ENCODE measurements at regions of chr17 and their contacts with region 1.

Region 1: GRCh38 chr17:80426681-80427326 is 11.8 kb downstream of the ENDOV start:
- DNase-seq: peak; percentile 67 to 95
- ATAC-seq: peak; percentile 74 to 91
- H3K4me3 ChIP-seq: no peak overlapping the region
- H3K27ac ChIP-seq: 0 out of 6 replicates have a peak overlapping the region, but pooled peaks of 1 of the 2 experiments have one; percentile 10
- H3K4me1 ChIP-seq: 0 out of 3 replicates have a peak, but pooled peaks cover 2% of the 10 kb centered on the region
- CTCF ChIP-seq: peak; percentile 98
- EP300 ChIP-seq: no peak
- POLR2A ChIP-seq: no peak
- RAD21 ChIP-seq: peak; percentile 98 to 99

Region 2: GRCh38 chr17:80195731-80196529 is 230.9 kb before region 1 on chr17:
- CTCF ChIA-PET with region 1: no interaction called
- POLR2A ChIA-PET with region 1: no interaction called
- DNase-seq: no peak
- ATAC-seq: peak in 1 of 2 experiments; percentile 14; a peak in 1 of 6 replicates
- H3K4me3 ChIP-seq: no peak overlapping the region
- H3K27ac ChIP-seq: no peak overlapping the region
- H3K4me1 ChIP-seq: no peaks in the 10 kb centered on the region
- CTCF ChIP-seq: peak; percentile 83
- EP300 ChIP-seq: no peak
- POLR2A ChIP-seq: no peak
- RAD21 ChIP-seq: peak; percentile 81 to 88

Region 3: GRCh38 chr17:80441133-80441578 is 14.4 kb after region 1 on chr17:
- CTCF ChIA-PET with region 1: interaction called, 85 read pairs
- POLR2A ChIA-PET with region 1: no interaction called
- DNase-seq: peak in 1 of 2 experiments; percentile 68
- ATAC-seq: peak; percentile 35 to 65; a peak in 3 of 6 replicates
- H3K4me3 ChIP-seq: no peak overlapping the region
- H3K27ac ChIP-seq: no peak overlapping the region
- H3K4me1 ChIP-seq: no peaks in the 10 kb centered on the region; the same call in 2 of the 3 replicates
- CTCF ChIP-seq: no peak
- EP300 ChIP-seq: no peak
- POLR2A ChIP-seq: no peak
- RAD21 ChIP-seq: no peak

Region 4: GRCh38 chr17:80454557-80455335 is 27.9 kb after region 1 on chr17:
- CTCF ChIA-PET with region 1: interaction called, 11 read pairs
- POLR2A ChIA-PET with region 1: interaction called, 9 read pairs
- DNase-seq: peak; percentile 98 to 99
- ATAC-seq: peak; percentile 89 to 95
- H3K4me3 ChIP-seq: peak overlapping the region; percentile 77
- H3K27ac ChIP-seq: peak overlapping the region; percentile 96 to 99
- H3K4me1 ChIP-seq: peaks cover 15% of the 10 kb centered on the region
- CTCF ChIP-seq: no peak
- EP300 ChIP-seq: no peak
- POLR2A ChIP-seq: peak; percentile 74
- RAD21 ChIP-seq: no peak

Region 5: DNA sequence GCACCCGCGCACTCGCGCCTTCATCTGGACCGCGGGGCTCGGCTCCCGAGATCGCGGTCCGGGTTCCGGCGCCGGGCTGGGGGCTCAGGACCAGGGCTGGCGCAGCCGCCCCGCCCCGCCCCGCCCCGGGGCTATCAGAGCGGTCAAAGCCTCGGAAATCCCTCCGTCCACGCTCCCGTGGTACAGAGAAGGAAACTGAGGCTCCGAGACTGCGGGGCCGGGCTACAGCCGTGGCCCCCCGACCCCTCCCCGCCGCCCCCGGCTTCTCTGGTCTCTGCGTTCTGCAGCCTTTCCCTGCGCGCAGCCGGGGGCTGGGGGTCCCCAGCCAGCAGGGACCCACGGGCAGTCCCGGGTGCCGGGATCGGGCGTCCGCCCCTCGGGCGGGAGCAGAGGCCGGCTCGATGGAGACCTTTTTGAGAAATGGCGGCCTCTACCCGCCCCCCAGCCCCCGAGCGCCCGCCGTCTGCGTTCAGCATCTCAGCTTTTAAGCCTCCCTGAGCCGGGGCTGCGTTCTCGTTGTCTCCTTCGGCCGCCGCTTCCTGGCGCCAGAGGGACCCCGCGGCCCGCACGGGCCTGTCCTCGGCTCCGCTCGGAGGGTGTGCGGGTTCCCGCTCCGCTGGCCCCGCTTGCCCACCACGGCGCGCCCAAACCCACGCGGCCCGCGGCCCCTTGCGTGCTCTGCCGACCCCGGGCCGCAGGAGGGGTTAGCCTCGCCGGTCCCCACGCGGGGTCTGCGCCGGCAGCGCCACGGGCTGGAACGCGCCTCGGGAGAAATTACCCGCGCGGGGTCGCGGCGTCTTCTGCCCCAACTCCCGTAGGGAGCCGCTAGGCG is 51.1 kb after region 1 on chr17:
- CTCF ChIA-PET with region 1: interaction called, 40 read pairs
- POLR2A ChIA-PET with region 1: no interaction called
- DNase-seq: peak; percentile 70 to 75
- ATAC-seq: peak; percentile 20 to 70; a peak in 3 of 6 replicates
- H3K4me3 ChIP-seq: peak overlapping the region; percentile 54
- H3K27ac ChIP-seq: peak overlapping the region; percentile 60 to 80
- H3K4me1 ChIP-seq: peaks cover 56% of the 10 kb centered on the region
- CTCF ChIP-seq: peak; percentile 67
- EP300 ChIP-seq: no peak
- POLR2A ChIP-seq: no peak
- RAD21 ChIP-seq: peak; percentile 77 to 90

Region 6: GRCh38 chr17:80704381-80704819 is 277.6 kb after region 1 on chr17:
- CTCF ChIA-PET with region 1: no interaction called
- POLR2A ChIA-PET with region 1: no interaction called
- DNase-seq: no peak
- ATAC-seq: no peak
- H3K4me3 ChIP-seq: no peak overlapping the region
- H3K27ac ChIP-seq: peak overlapping the region; percentile 38 to 75; a peak in 5 of 6 replicates
- H3K4me1 ChIP-seq: peaks cover 26% of the 10 kb centered on the region
- CTCF ChIP-seq: no peak
- EP300 ChIP-seq: no peak
- POLR2A ChIP-seq: no peak
- RAD21 ChIP-seq: no peak

Region 7: GRCh38 chr17:80959330-80960036 is 532.7 kb after region 1 on chr17:
- CTCF ChIA-PET with region 1: interaction called, 10 read pairs
- POLR2A ChIA-PET with region 1: no interaction called
- DNase-seq: no peak
- ATAC-seq: peak in 1 of 2 experiments; percentile 6; a peak in 2 of 6 replicates
- H3K4me3 ChIP-seq: no peak overlapping the region
- H3K27ac ChIP-seq: no peak overlapping the region
- H3K4me1 ChIP-seq: no peaks in the 10 kb centered on the region
- CTCF ChIP-seq: no peak
- EP300 ChIP-seq: no peak
- POLR2A ChIP-seq: no peak
- RAD21 ChIP-seq: no peak

Region 8: GRCh38 chr17:80981062-80981902 is 554.5 kb after region 1 on chr17:
- CTCF ChIA-PET with region 1: interaction called, 51 read pairs
- POLR2A ChIA-PET with region 1: no interaction called
- DNase-seq: no peak
- ATAC-seq: peak; percentile 55 to 77
- H3K4me3 ChIP-seq: peak overlapping the region; percentile 41
- H3K27ac ChIP-seq: peak overlapping the region in 1 of 2 experiments; percentile 76; a peak in 3 of 6 replicates
- H3K4me1 ChIP-seq: peaks cover 4% of the 10 kb centered on the region; the same call in 2 of the 3 replicates
- CTCF ChIP-seq: peak; percentile 98
- EP300 ChIP-seq: no peak
- POLR2A ChIP-seq: no peak
- RAD21 ChIP-seq: peak; percentile 78 to 98

Measured in A549 (cell line).